Endothelial cell of umbilical vein (primary cell): ENCODE measurements at regions of chr3 and their contacts with region 1.

Region 1: GRCh38 chr3:177624514-177625495 is 427.5 kb upstream of the TBL1XR1 start:
- DNase-seq: peak; percentile 77
- H3K4me3 ChIP-seq: no peak overlapping the region
- H3K27ac ChIP-seq: no peak overlapping the region
- H3K4me1 ChIP-seq: peaks cover 13% of the 10 kb centered on the region
- H3K27me3 ChIP-seq: no peaks in the 10 kb centered on the region
- CTCF ChIP-seq: no peak
- POLR2A ChIP-seq: no peak

Region 2: GRCh38 chr3:177050501-177051237 is 574.1 kb before region 1 on chr3:
- CTCF ChIA-PET with region 1: interaction called, 5 read pairs
- POLR2A ChIA-PET with region 1: no interaction called
- dilution Hi-C with region 1: no loop called
- intact Hi-C with region 1: loop called (anchors 10 kb)
- DNase-seq: peak; percentile 71
- H3K4me3 ChIP-seq: no peak overlapping the region
- H3K27ac ChIP-seq: no peak overlapping the region
- H3K4me1 ChIP-seq: no peaks in the 10 kb centered on the region
- H3K27me3 ChIP-seq: no peaks in the 10 kb centered on the region
- CTCF ChIP-seq: no peak
- POLR2A ChIP-seq: no peak